GM10248 (cell line): ENCODE measurements at regions of chr1 and their contacts with region 1.

Region 1: GRCh38 chr1:147084273-147085096 is 87.8 kb downstream of the PRKAB2 start:
- DNase-seq: peak; percentile 76
- CTCF ChIP-seq: no peak

Region 2: DNA sequence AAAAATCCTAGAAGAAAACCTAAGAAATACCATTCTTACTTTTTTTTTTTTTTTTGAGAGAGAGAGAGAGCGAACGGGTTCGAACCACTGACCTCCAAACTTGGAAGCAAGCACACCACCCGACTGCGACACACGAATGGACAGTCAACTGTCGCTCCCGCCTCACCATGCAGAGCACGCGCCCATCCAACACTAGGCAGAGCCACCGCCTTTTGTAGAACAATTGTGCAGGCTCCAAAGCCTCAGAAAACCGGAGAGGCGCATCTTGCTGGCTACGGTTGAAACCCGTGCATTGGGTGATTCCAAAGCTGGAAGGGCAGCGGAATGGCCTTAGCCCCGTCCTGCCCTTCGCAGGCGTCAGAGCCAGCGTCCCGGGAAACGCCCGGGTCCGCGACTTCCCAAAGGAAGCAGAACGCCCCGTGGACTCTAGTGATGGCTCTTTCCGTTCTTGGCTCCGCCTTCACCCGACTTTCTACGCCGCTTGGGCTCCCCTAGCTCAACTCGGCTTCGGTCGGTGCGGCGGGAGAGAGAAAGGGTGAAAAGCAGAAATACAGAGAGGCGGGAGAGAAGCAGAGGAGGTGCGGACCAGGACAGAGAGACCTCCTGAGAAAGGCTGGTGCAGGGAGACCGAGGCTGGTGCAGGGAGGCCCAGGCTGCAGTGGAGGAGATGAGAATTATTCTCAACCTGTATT is 12.0 kb before region 1 on chr1:
- CTCF ChIA-PET with region 1: no interaction called
- POLR2A ChIA-PET with region 1: interaction called, 10 read pairs
- DNase-seq: no peak
- CTCF ChIP-seq: no peak